ENCODE measurements at regions of chr6 and their contacts with region 1.

Region 1: GRCh38 chr6:158704181-158704822 is 54.4 kb downstream of the SYTL3 start:
- DNase-seq: peak; percentile 41 to 91 (median 81)

Region 2: GRCh38 chr6:158666628-158667359 is 37.5 kb before region 1 on chr6:
- intact Hi-C with region 1: no loop called
- DNase-seq: no peak

Region 3: DNA sequence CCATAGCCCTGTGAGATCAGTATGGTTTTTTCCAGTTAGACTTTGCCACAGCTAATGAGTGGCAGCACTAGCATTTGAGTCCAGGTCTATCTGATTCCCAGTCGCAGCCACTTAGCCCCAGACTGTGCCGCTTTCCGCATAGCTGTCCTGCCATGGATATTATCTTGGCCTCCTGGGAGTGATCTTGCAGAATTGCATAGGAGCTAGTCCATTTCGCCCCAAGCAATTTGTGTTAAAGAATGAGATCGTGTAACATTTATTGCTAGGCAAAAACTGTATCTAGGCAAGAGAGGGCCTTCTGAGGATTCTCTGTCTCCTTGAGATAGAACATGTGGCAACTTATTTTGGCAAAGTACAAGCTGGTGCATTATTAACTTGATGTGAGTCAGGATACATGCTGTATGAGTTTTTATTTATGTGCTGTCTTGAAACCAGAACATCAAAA is 40.7 kb after region 1 on chr6:
- intact Hi-C with region 1: no loop called
- DNase-seq: no peak

Region 4: GRCh38 chr6:158972241-158973233 is 268.2 kb after region 1 on chr6:
- intact Hi-C with region 1: loop called (anchors 5 kb)
- DNase-seq: no peak